Caco-2 (cell line): ENCODE measurements at regions of chr7 and their contacts with region 1.

Region 1: DNA sequence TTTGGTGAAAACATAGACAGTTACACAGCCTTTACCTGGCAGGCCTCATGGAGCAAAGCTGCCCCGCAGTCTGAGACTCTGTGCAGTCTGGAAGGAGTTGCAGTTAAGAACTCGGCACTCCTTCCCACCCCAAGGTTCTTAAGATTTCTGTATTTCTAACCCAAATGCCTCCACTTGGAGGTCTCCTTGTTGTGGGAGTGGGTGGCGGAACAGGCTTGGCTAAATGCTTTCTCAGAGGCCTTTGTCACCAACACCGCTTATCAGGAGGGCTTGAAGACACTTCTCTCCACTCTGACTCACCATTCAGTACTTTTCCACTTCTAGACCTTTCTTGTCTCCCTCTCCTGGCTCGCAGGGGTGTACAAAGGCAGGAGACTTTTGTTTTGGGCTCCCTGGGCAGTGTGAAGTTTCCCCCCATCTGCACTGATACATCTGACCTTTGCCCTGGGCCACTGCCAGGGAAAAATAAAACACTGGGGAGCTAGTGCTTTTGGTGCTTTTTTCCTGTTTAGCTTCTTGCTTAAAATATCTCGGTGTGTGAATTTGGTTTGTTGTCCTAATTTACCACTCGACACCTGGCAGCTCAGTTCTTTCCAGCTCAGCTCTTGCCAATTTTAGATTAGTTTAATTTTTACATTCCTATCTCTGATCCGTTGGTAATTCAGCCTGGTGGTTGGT is 51.4 kb upstream of the MAGI2 start:
- DNase-seq: peak; percentile 67 to 74
- H3K4me3 ChIP-seq: no peak overlapping the region
- H3K4me3 Mint-ChIP-seq: peak overlapping the region; percentile 42
- H3K27ac Mint-ChIP-seq: peak overlapping the region; percentile 90
- H3K4me1 ChIP-seq: peaks cover 56% of the 10 kb centered on the region
- H3K4me1 Mint-ChIP-seq: peaks cover 39% of the 10 kb centered on the region
- H3K27me3 ChIP-seq: no peaks in the 10 kb centered on the region
- H3K27me3 Mint-ChIP-seq: no peaks in the 10 kb centered on the region
- CTCF ChIP-seq: no peak

Region 2: DNA sequence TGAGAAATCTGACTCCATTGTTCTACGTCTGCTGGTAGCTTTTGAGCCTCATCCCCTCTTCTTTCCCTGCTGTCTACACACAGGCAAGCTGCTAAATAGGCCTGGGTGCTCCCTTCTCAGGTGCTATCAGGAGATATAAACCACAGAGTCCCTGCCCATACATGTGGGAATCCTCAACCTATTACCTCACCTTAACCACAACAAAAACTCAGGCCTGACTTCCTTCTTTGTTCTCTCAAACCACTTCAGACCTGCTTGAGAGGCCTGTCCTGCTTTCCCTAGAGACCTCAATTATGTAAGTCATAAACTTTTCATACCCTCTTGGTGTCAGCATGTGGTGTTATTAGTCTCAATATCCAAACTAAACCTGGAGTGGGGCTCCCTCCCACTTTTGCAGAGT is 23.6 kb after region 1 on chr7:
- CTCF ChIA-PET with region 1: no interaction called
- POLR2A ChIA-PET with region 1: no interaction called
- intact Hi-C with region 1: loop called (anchors 2 kb)
- DNase-seq: no peak
- H3K4me3 ChIP-seq: no peak overlapping the region
- H3K4me3 Mint-ChIP-seq: no peak overlapping the region
- H3K27ac Mint-ChIP-seq: no peak overlapping the region
- H3K4me1 ChIP-seq: peaks cover 11% of the 10 kb centered on the region; the same call in 1 of the 2 replicates
- H3K4me1 Mint-ChIP-seq: peaks cover 21% of the 10 kb centered on the region
- H3K27me3 ChIP-seq: no peaks in the 10 kb centered on the region
- H3K27me3 Mint-ChIP-seq: no peaks in the 10 kb centered on the region
- CTCF ChIP-seq: no peak

Region 3: DNA sequence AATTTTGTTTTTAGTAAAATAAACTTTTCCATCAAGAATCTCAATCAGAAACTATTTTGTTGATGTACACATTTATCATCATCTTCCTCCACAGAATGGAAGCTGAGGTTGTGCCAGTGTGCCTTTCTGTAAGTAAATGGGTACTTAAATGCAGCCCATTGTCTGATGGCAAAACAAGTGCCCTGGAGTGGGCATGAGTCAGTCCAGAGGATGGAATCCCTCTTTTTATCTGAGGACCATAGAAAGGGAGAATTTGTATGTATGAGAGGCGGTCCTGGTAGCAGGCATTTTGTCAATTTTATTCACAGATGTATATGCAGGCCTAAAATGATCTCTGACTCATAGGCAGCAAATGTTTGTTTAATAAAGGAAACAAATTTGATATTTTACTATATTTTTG is 50.7 kb after region 1 on chr7:
- CTCF ChIA-PET with region 1: no interaction called
- POLR2A ChIA-PET with region 1: no interaction called
- intact Hi-C with region 1: loop called (anchors 5 kb)
- DNase-seq: no peak
- H3K4me3 ChIP-seq: no peak overlapping the region
- H3K4me3 Mint-ChIP-seq: no peak overlapping the region
- H3K27ac Mint-ChIP-seq: no peak overlapping the region
- H3K4me1 ChIP-seq: no peaks in the 10 kb centered on the region
- H3K4me1 Mint-ChIP-seq: peaks cover 6% of the 10 kb centered on the region
- H3K27me3 ChIP-seq: no peaks in the 10 kb centered on the region
- H3K27me3 Mint-ChIP-seq: no peaks in the 10 kb centered on the region
- CTCF ChIP-seq: no peak

Region 4: GRCh38 chr7:79570904-79571303 is 66.1 kb after region 1 on chr7:
- CTCF ChIA-PET with region 1: no interaction called
- POLR2A ChIA-PET with region 1: no interaction called
- intact Hi-C with region 1: no loop called
- DNase-seq: no peak
- H3K4me3 ChIP-seq: no peak overlapping the region
- H3K4me3 Mint-ChIP-seq: no peak overlapping the region
- H3K27ac Mint-ChIP-seq: no peak overlapping the region
- H3K4me1 ChIP-seq: no peaks in the 10 kb centered on the region
- H3K4me1 Mint-ChIP-seq: peaks cover 6% of the 10 kb centered on the region
- H3K27me3 ChIP-seq: no peaks in the 10 kb centered on the region
- H3K27me3 Mint-ChIP-seq: no peaks in the 10 kb centered on the region
- CTCF ChIP-seq: no peak

Region 5: DNA sequence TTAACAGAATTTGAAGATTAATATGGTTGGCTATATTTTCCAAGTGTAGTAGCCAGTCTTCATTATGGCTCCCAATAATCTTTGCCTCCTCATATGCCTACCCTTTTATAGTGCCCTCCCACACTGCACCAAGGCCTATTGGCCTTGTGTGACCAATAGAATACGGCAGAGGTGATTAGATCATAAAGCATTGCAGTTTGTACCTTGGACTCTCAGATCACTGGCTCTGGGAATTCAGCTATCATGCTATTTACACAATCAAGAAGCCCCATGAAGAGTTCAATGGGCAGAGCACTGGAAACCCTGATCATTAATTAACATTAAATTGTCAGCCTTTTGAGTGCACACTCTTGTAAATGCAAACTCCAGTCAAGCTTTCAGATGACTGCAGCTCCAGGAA is 103.2 kb after region 1 on chr7:
- CTCF ChIA-PET with region 1: no interaction called
- POLR2A ChIA-PET with region 1: no interaction called
- intact Hi-C with region 1: loop called (anchors 5 kb)
- DNase-seq: peak; percentile 35 to 43
- H3K4me3 ChIP-seq: no peak overlapping the region
- H3K4me3 Mint-ChIP-seq: peak overlapping the region; percentile 21
- H3K27ac Mint-ChIP-seq: peak overlapping the region; percentile 40
- H3K4me1 ChIP-seq: peaks cover 18% of the 10 kb centered on the region
- H3K4me1 Mint-ChIP-seq: peaks cover 25% of the 10 kb centered on the region
- H3K27me3 ChIP-seq: no peaks in the 10 kb centered on the region
- H3K27me3 Mint-ChIP-seq: no peaks in the 10 kb centered on the region
- CTCF ChIP-seq: no peak